Heart right ventricle (tissue), 16 donors: ENCODE measurements at regions of chr4 and their contacts with region 1.

Region 1: GRCh38 chr4:77433418-77433733 is 172.2 kb upstream of the CXCL13 start:
- DNase-seq: peak in 1 of 2 donors; percentile 23
- ATAC-seq: peak; percentile 70 to 89 (median 74)
- H3K4me3 ChIP-seq: peak overlapping the region in 1 of 10 donors; percentile 14
- H3K27ac ChIP-seq: peak overlapping the region in 1 of 10 donors; percentile 52
- H3K4me1 ChIP-seq: peaks cover 0 to 23% (median 9%) of the 10 kb centered on the region in 9 donors
- H3K27me3 ChIP-seq: no peaks in the 10 kb centered on the region
- CTCF ChIP-seq: peak; percentile 28 to 78 (median 62)

Region 2: GRCh38 chr4:78237360-78237759 is 804.0 kb after region 1 on chr4:
- intact Hi-C with region 1: loop called in 1 of 10 experiments (anchors 5 kb)
- DNase-seq: no peak
- ATAC-seq: no peak
- H3K4me3 ChIP-seq: no peak overlapping the region
- H3K27ac ChIP-seq: no peak overlapping the region
- H3K4me1 ChIP-seq: no peaks in the 10 kb centered on the region
- H3K27me3 ChIP-seq: no peaks in the 10 kb centered on the region
- CTCF ChIP-seq: no peak